KBM-7 (cell line): ENCODE measurements at regions of chr11 and their contacts with region 1.

Region 1: GRCh38 chr11:44943118-44943517 is 7.6 kb downstream of the TP53I11 start:
- DNase-seq: peak; percentile 80

Region 2: GRCh38 chr11:45102810-45103621 is 159.9 kb after region 1 on chr11:
- in situ Hi-C with region 1: loop called (anchors 5 kb)
- DNase-seq: peak; percentile 72